Heart right ventricle (tissue), 16 donors: ENCODE measurements at regions of chr1 and their contacts with region 1.

Region 1: GRCh38 chr1:238099871-238100270 is 209.1 kb upstream of the ZP4 start:
- DNase-seq: no peak
- ATAC-seq: no peak
- H3K4me3 ChIP-seq: no peak overlapping the region
- H3K27ac ChIP-seq: no peak overlapping the region
- H3K4me1 ChIP-seq: no peaks in the 10 kb centered on the region
- H3K27me3 ChIP-seq: no peaks in the 10 kb centered on the region
- CTCF ChIP-seq: no peak

Region 2: GRCh38 chr1:238029126-238029525 is 70.7 kb before region 1 on chr1:
- intact Hi-C with region 1: loop called in 1 of 10 experiments (anchors 10 kb)
- DNase-seq: no peak
- ATAC-seq: no peak
- H3K4me3 ChIP-seq: no peak overlapping the region
- H3K27ac ChIP-seq: no peak overlapping the region
- H3K4me1 ChIP-seq: no peaks in the 10 kb centered on the region
- H3K27me3 ChIP-seq: peaks cover 0 to 3% (median 0%) of the 10 kb centered on the region in 7 donors
- CTCF ChIP-seq: no peak